MCF 10A (cell line): ENCODE measurements at regions of chr2 and their contacts with region 1.

Region 1: DNA sequence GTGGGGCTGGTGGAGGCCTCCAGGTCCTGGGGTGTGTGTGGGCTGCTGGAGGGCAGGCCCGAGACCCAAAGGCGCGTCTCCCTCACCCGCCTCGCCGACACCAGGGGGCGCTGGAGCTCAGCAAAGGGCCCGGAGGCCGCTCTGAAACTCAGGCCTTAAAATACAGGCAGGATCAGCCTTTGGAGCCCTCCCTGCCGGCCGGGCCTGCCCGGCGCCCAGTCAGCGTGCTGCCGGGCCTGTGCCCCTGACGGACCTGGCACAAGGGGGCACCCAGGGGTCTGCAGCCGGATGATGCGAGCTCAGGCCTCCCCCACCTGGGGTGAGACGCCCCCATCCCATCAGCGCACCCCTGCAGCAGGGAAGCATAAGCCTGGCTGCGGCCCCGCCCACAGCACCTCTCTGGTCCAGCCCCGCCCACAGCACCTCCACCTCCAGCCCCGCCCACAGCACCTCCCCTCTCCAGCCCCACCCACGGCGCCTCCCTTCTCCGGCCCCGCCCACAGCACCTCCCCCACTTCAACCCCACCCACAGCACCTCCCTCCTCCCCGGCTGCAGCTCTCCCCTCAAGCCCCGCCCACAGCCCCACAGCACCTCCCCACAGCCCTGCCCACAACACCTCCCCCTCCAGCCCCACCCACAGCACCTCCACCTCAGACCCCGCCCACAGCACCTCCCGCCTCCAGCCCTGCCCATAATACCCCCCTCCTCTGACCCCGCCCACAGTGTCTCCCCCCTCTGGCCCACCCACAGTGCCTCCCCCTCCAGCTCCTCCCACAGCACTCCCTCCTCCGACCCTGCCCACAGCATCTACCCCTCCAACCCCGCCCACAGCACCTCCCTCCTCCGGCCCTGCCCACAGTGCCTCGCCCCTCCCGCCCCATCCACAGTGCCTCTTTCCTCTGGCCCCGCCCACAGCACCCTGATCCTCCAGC is 92.8 kb upstream of the OTOS start:
- DNase-seq: peak; percentile 90
- H3K4me3 Mint-ChIP-seq: peak overlapping the region; percentile 54
- H3K27ac Mint-ChIP-seq: no peak overlapping the region
- H3K4me1 Mint-ChIP-seq: peaks cover 27% of the 10 kb centered on the region
- H3K27me3 Mint-ChIP-seq: no peaks in the 10 kb centered on the region
- CTCF ChIP-seq: peak; percentile 93

Region 2: DNA sequence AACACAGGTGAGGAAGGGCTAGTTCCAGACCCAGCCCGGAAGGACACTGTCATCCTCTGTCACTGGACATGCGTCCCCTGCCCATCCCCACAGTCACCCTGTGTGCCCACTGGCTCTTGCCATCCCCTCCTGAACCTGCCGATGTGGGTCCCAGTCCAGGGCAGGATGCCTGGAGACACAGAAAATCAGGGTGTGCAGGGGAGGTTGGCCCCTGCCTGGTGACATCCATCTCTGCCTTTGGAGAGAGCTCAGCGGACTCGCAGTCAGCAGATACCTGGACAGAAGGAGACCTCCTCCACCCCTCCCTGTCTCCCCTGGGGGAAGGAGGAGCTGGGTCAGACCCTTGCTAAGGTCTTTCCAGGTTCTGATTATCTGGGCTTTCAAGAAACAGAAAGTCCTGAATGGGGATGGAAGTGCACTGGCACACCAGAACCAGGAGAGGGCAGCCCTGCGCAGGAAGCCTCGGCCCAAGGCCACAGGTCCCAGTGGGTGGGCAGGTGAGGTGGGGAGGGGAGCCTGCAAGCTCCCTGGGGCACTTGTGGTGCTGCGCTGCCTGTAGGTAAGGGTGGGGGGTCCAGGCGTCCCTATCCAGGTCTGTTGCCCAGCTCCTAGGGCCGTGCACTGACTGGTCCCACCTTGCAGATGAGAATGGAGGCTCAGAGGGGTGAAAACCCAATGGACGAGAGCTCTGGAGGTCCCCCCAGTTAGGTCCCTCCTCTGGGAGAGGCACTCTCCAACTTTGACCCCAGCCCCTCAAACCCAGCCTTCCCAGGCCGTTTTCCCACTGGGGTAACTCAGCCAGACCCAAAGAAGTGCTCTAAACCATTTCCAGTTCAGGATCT is 83.1 kb before region 1 on chr2:
- CTCF ChIA-PET with region 1: interaction called, 4 read pairs
- POLR2A ChIA-PET with region 1: no interaction called
- intact Hi-C with region 1: loop called (anchors 1 kb)
- DNase-seq: peak; percentile 50
- H3K4me3 Mint-ChIP-seq: no peak overlapping the region
- H3K27ac Mint-ChIP-seq: no peak overlapping the region
- H3K4me1 Mint-ChIP-seq: no peaks in the 10 kb centered on the region
- H3K27me3 Mint-ChIP-seq: peaks cover 37% of the 10 kb centered on the region
- CTCF ChIP-seq: peak; percentile 83

Region 3: DNA sequence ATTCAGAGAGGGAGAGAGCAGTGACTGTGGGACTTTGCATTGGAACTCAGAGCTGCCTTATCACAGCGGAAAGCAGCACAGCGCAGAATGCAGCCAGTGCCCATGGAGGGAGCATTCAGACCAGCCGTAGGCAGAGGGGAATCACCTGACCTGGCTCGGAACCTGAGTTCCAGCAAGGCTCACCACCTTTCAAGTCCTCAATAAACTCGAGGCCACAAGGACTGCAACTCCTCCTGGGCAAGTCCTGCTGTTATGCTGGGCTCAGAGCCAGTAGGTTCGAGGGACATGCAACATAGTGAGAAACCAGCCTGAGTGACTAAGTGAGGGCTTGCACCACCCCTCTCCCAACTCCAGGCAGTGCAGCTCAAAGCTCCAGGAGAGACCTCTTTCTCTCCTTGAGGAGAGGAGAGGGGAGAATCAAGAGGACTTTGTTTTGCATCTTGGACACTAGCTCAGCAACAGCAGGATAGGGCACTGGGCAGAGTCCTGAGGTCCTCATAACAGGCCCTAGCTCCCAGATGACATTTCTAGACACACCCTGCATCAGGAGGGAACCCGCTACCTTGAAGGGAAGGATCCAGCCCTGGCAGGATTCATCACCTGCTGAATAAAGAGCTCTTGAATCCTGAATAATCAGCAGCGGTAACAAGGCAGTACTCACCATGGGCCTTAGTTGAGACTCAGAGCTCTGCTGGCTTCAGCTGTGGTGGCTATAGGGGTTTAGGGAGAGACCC is 44.0 kb after region 1 on chr2:
- CTCF ChIA-PET with region 1: no interaction called
- POLR2A ChIA-PET with region 1: no interaction called
- intact Hi-C with region 1: loop called (anchors 1 kb)
- DNase-seq: peak; percentile 89
- H3K4me3 Mint-ChIP-seq: no peak overlapping the region
- H3K27ac Mint-ChIP-seq: no peak overlapping the region
- H3K4me1 Mint-ChIP-seq: peaks cover 26% of the 10 kb centered on the region
- H3K27me3 Mint-ChIP-seq: peaks cover 62% of the 10 kb centered on the region
- CTCF ChIP-seq: no peak

Region 4: DNA sequence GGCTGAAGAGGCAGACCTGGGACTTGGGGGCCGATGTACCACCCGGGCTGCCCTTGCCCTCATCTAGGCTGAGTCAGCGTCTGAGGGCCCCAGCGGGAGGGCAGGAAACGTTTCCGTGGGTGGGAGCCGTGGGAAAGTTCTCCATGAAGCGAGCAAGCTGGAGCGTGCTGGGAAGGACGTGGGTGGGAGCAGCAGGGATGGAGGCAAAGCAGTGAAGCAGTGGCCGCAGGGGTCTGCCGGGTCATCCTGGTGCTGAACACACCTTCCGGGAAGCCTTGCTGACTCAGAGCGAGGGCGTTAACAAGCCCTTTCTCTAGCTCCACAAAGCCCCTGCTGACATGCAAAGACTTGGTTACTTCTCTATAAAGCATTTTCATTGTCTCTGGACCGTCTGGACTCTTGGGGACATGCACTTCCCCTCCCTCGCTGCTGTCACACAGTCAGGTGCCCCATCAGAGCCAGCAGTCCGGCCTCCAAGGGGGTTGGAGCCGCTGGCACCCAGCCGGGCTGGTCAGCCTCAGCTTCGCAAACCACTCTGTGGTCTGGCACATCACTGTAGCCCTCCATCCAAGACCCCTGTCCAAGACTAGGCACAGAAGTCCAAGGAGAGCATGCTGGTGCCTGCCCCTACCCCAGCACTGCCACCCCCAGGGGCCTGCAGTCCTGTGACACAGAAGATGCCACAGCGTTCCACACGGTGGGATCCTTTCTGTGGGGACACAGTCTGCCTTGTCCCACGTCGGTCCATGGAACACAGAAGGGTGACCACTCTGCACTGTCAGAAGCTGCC is 87.2 kb after region 1 on chr2:
- CTCF ChIA-PET with region 1: no interaction called
- POLR2A ChIA-PET with region 1: interaction called, 3 read pairs
- intact Hi-C with region 1: loop called (anchors 5 kb)
- DNase-seq: peak; percentile 83
- H3K4me3 Mint-ChIP-seq: no peak overlapping the region
- H3K27ac Mint-ChIP-seq: no peak overlapping the region
- H3K4me1 Mint-ChIP-seq: peaks cover 7% of the 10 kb centered on the region
- H3K27me3 Mint-ChIP-seq: peaks cover 21% of the 10 kb centered on the region
- CTCF ChIP-seq: no peak

Region 5: DNA sequence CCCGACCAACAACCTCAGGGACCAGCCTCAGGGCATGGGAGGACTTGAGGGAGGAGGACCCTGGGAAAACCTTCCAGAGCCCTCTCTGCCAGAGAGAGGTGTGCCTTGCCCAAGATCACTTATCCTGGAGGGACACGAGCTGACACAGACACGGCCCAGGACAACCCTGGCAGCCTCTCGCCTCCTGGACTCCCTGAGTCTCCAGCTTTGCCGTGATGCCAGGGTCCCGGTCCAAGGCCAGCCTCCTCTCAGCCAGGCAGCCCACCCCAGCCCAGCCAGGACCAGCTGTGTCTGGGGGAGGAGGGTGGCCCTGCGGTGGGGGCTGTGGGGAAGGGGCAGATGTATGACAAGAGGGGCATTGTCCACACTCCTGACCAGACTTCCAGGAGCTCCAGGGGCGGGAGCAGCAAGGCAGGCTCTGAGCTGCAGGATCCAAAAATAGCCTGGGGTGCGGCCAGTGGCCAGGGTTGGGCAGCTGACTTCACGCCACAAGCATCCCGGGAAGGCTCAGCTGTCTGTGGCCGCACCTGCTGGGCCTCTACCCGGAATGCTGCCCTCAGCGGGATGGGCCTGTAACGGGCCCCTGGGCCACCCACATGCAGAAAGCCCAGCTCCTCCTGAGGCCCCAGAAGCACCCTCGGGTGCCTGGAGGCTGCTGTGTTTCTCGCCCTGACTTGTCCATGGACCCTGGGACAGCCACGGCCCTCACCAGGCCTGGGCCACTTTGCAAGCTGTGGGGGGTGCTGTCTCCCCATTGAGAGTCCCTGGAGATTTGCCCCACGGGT is 136.8 kb after region 1 on chr2:
- CTCF ChIA-PET with region 1: interaction called, 3 read pairs
- POLR2A ChIA-PET with region 1: interaction called, 3 read pairs
- intact Hi-C with region 1: loop called (anchors 2 kb)
- DNase-seq: peak; percentile 84
- H3K4me3 Mint-ChIP-seq: no peak overlapping the region
- H3K27ac Mint-ChIP-seq: peak overlapping the region; percentile 35
- H3K4me1 Mint-ChIP-seq: peaks cover 17% of the 10 kb centered on the region
- H3K27me3 Mint-ChIP-seq: no peaks in the 10 kb centered on the region
- CTCF ChIP-seq: no peak

Region 6: DNA sequence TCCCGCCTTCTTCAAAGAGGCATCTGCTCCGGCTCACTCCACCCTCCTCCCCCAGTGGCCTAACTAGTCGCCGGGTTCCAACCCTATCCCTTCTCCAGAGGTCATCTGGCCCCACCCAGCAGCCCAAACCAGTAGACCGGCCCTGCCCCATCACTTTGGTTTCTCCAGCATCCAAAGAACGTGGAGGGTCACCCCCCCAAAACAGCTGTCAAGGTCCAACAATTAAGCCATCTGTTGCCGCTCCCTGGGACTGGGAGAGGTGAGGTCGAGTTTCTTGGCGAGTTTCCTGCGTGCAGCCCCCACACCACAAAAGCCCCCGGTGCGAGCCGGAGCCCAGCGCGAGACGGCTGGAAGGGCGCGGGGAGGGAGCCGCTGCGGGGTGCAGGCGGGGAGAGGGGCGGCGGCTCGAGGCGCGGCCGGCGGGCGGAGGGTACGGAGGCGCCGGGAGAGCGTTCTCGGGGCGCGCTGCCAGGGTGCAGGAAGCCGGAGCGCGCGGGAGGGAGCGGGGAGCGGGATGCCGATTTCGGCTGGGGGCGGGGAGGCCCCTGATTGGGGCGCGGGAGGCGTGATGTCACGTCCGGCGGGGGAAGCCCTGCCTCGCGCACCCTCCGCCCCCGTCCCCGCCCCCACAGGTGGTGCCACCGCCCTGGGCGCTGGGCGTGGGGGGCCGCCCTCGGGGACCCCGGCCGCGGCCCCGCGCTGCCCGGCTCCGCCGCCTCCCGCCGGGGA is 201.7 kb after region 1 on chr2:
- CTCF ChIA-PET with region 1: interaction called, 28 read pairs
- POLR2A ChIA-PET with region 1: interaction called, 19 read pairs
- intact Hi-C with region 1: loop called (anchors 1 kb)
- DNase-seq: peak; percentile 92
- H3K4me3 Mint-ChIP-seq: peak overlapping the region; percentile 85
- H3K27ac Mint-ChIP-seq: peak overlapping the region; percentile 86
- H3K4me1 Mint-ChIP-seq: peaks cover 23% of the 10 kb centered on the region
- H3K27me3 Mint-ChIP-seq: no peaks in the 10 kb centered on the region
- CTCF ChIP-seq: no peak

Region 7: DNA sequence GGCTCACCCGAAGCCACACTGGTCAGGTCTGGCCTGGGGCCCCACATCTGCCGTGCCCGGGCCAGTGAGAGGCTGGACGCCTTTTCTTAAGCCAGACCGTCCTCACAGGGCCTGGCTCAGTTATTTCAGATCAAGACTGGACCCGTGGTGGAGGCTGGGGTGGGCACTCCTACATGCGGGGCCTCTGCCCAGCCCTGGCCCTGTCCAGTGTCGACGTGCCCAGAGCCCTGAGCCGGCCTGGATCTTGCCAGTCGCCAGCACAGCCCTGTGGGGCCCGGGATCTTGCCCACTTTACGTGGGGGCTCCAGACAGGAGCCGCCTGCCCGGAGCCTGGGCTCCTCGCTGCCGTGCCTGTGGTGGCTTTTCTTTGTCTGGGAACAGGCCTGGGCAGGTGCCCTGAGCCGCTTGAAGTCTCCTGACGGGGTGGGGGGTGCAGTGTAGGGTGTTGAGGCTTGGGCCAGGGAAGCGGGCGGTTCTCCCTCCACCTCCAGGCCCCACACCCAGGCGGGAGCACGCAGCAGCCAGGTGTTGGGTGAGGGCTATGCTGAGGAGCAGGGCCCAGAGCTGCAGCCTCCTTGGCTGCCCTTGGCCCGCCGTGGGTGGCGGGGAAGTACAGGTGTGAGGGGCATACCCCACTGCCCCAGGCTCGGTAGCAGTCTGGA is 208.2 kb after region 1 on chr2:
- CTCF ChIA-PET with region 1: interaction called, 28 read pairs
- POLR2A ChIA-PET with region 1: interaction called, 19 read pairs
- intact Hi-C with region 1: loop called (anchors 1 kb)
- DNase-seq: no peak
- H3K4me3 Mint-ChIP-seq: no peak overlapping the region
- H3K27ac Mint-ChIP-seq: peak overlapping the region; percentile 27
- H3K4me1 Mint-ChIP-seq: peaks cover 6% of the 10 kb centered on the region
- H3K27me3 Mint-ChIP-seq: no peaks in the 10 kb centered on the region
- CTCF ChIP-seq: no peak